ENCODE measurements at regions of chr12 and their contacts with region 1.

Region 1: GRCh38 chr12:24455811-24456210 is 493.1 kb downstream of the BCAT1 start:
- DNase-seq: no peak
- ATAC-seq: no peak

Region 2: GRCh38 chr12:24534622-24535021 is 78.8 kb after region 1 on chr12:
- intact Hi-C with region 1: loop called (anchors 10 kb)
- DNase-seq: no peak
- ATAC-seq: peak; percentile 75